ENCODE measurements at regions of chr1 and their contacts with region 1.

Region 1: DNA sequence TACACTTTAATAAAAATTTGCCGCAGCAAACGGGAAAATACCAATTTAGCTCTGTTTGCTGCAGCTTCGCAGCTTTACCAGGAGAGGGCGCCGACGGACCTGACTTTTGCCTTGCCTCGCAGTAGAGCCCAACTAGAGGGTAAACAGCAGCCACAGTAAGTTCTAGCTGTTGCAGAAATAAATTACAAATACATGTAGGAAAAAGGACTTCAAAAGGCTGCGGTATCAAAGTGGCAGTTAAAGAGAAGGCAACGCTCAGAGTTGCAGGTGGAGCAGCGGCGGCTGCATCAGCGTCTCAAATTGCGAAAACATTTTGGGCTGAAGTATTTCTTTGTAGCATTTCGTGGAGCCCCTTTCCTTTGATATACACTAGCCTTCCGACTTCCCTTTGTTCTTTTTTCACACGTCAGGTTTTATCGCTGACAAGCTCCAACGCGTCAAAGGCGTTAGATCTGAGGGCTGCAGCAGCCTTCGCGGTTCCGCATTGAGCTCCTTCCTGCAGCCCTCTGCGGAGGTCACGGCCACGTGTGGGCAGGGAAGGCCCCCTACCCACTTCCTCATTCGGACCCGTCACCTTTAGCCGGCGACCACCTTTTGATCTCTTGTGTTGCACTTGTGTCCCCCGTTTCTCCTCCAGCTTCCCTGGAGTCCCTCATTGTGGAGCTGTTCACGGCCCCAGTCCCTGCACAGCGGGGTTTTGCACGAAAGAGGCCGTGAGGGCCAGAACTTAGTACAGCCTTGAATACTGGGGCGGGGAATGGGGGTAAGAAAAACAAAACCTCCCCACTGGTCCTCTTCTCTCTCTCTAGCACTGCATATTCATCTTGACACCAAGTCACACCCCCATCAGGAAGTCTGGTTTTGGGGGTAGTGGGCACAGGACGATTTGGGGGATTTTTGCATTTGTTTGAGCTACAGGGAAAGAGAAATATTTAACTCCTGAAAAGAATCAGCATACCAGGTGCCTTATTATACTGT is 72.8 kb downstream of the S1PR1 start:
- DNase-seq: peak; percentile 80

Region 2: GRCh38 chr1:101238681-101239094 is 70.9 kb before region 1 on chr1:
- CTCF ChIA-PET with region 1: no interaction called
- POLR2A ChIA-PET with region 1: no interaction called
- DNase-seq: peak; percentile 87

Region 3: GRCh38 chr1:101282314-101283038 is 27.1 kb before region 1 on chr1:
- CTCF ChIA-PET with region 1: no interaction called
- POLR2A ChIA-PET with region 1: no interaction called
- DNase-seq: peak; percentile 54

Region 4: DNA sequence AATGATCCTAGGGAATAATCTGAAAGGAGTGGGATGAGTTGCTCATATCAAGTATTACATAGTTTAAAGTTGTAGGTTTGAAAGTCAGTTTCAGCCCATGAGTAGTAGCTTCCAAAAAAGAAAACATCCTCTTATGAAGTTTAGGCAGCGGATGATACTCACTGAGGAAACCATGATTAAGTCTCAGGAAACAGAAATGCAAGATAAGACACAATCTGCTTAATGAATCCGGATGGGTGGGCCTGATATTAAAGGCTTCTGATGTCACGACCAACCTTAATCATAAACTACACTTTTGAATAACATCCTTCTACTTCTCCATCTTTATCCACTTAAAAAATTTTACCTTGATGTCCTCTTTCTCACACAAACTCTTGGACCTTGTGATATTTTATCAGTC is 11.0 kb before region 1 on chr1:
- CTCF ChIA-PET with region 1: interaction called, 14 read pairs
- POLR2A ChIA-PET with region 1: no interaction called
- DNase-seq: no peak

Region 5: DNA sequence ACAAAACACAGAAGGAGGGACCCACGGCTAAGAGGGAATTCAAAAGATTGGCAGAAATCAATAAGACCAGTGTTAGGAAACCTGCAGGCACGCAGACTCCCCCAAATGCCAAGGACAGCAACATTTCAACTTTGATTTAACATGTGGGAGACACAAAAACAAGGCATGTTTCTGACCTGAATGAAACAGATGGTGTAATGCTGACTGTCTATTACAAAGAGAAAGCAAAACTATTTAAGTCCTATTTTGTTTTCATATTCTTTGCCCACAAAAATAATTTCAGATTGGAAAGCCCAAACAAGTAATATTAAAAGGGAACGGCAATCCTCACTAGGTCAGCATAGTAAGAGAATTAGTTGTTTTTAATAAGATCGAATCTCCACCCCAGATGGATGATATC is 35.1 kb after region 1 on chr1:
- CTCF ChIA-PET with region 1: no interaction called
- POLR2A ChIA-PET with region 1: no interaction called
- DNase-seq: no peak

Region 6: GRCh38 chr1:101357444-101357986 is 47.9 kb after region 1 on chr1:
- CTCF ChIA-PET with region 1: interaction called, 29 read pairs
- POLR2A ChIA-PET with region 1: interaction called, 3 read pairs
- DNase-seq: peak; percentile 87